ENCODE measurements at regions of chr1 and their contacts with region 1.

Region 1: GRCh38 chr1:8987881-8988617 is 38.2 kb downstream of the SLC2A7 start:
- DNase-seq: peak; percentile 93
- H3K4me3 Mint-ChIP-seq: peak overlapping the region; percentile 65
- H3K27ac Mint-ChIP-seq: peak overlapping the region; percentile 89
- H3K4me1 Mint-ChIP-seq: peaks cover 57% of the 10 kb centered on the region
- H3K27me3 Mint-ChIP-seq: no peaks in the 10 kb centered on the region

Region 2: DNA sequence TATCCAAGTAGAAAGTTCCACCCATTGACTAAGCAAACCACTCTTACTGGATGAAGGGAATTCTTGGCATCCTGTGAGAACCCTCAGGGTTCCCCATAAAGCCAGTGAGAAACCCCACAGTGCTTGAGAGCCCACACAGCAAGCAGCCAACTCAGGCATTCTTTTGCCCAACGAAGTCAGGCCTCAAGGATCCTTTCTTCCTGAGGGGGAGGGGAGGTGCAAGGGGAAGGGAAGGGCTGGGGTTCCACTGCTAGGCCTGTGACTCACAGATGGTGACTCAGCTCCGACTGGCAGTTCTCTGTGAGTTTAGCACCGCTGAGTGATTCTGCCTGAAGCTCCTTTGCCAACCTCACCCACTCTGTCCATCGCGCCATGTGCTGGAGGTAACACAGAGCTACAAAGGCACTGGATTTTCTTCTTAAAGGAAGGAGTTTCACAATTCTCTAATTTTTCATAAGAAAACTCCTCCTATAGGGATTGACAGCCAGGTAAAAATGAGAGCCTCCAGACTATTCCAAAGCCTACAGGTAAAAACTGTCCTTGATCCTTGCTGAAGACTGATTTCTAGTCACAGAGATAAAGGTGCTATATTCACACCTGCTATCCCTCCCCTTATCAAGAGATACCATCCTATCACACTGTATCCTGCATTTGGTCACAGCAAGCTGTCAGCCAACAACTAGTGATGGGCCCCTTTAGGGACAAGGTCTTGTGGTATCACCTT is 114.4 kb before region 1 on chr1:
- intact Hi-C with region 1: loop called (anchors 5 kb)
- DNase-seq: peak; percentile 88
- H3K4me3 Mint-ChIP-seq: peak overlapping the region; percentile 92
- H3K27ac Mint-ChIP-seq: peak overlapping the region; percentile 77
- H3K4me1 Mint-ChIP-seq: peaks cover 59% of the 10 kb centered on the region
- H3K27me3 Mint-ChIP-seq: no peaks in the 10 kb centered on the region

Region 3: DNA sequence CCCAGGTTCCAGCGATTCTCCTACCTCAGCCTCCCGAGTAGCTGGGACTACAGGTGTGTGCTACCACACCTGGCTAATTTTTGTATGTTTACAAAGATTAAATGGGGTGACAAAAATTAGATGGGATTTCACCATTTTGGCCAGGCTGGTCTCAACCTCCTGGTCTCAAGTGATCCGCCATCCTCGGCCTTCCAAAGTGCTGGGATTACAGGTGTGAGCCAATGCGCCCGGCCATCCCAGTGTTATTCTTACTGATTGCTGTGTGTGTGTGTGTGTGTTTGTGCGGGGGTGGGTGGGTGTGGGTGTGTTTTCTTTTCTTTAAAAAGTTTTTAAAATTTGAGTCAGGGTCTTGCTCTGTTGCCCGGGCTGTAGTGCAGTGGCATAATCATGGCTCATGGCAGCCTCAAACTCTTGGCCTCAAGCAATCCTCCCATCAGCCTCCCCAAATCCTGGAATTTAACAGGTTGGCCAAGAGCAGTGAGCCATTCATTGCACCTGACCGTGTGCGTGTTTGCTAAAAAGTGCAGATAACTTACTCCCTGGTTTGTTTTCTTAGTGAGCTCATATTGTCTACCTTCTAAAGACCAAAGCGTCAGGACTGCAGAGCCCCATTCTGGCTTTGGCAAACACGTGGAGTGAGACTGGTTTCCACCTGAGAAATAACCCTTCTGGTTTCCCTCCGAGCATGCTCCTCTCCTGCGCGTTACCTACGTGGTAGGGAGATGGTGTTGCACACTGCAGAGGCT is 74.8 kb before region 1 on chr1:
- intact Hi-C with region 1: loop called (anchors 1 kb)
- DNase-seq: no peak
- H3K4me3 Mint-ChIP-seq: no peak overlapping the region
- H3K27ac Mint-ChIP-seq: no peak overlapping the region
- H3K4me1 Mint-ChIP-seq: peaks cover 27% of the 10 kb centered on the region
- H3K27me3 Mint-ChIP-seq: no peaks in the 10 kb centered on the region

Region 4: GRCh38 chr1:8947127-8947691 is 40.8 kb before region 1 on chr1:
- intact Hi-C with region 1: loop called (anchors 5 kb)
- DNase-seq: peak; percentile 79
- H3K4me3 Mint-ChIP-seq: peak overlapping the region; percentile 69
- H3K27ac Mint-ChIP-seq: peak overlapping the region; percentile 99
- H3K4me1 Mint-ChIP-seq: peaks cover 68% of the 10 kb centered on the region
- H3K27me3 Mint-ChIP-seq: no peaks in the 10 kb centered on the region

Region 5: DNA sequence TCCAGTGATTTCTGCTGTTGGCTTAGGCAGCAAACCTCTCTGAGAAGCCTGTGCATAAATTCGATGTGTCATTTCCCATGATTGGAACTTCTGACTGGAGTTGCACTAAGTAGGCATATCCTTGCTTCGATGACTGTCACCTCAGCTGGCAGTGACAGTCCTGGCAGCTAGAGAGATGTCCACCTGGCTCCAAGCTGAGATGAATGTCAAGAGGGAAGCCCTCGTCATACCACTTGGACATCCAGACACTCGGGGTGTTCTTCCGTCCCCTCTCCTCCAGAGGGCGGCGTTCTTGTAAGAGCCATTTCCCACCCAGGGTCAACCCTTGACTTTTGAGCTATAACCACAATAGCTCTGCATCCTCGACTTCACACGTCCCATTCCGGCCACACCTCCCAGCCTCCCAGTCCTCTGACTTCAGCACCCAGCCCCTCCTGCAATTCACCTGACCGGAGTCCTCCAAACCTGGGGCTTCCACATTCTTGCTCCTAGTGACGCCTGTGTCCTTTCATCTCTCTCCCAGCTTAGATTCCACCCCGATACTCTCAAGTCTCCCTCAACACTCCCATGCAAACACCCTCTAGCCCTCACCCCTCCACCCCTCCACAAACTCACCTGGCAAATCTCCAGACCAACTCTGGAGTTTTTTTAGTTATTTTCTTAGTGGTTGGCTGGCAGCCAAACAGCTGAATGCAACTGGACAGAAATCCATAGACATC is 25.1 kb before region 1 on chr1:
- intact Hi-C with region 1: loop called (anchors 2 kb)
- DNase-seq: peak; percentile 83
- H3K4me3 Mint-ChIP-seq: peak overlapping the region; percentile 71
- H3K27ac Mint-ChIP-seq: peak overlapping the region; percentile 91
- H3K4me1 Mint-ChIP-seq: peaks cover 68% of the 10 kb centered on the region
- H3K27me3 Mint-ChIP-seq: no peaks in the 10 kb centered on the region

Region 6: DNA sequence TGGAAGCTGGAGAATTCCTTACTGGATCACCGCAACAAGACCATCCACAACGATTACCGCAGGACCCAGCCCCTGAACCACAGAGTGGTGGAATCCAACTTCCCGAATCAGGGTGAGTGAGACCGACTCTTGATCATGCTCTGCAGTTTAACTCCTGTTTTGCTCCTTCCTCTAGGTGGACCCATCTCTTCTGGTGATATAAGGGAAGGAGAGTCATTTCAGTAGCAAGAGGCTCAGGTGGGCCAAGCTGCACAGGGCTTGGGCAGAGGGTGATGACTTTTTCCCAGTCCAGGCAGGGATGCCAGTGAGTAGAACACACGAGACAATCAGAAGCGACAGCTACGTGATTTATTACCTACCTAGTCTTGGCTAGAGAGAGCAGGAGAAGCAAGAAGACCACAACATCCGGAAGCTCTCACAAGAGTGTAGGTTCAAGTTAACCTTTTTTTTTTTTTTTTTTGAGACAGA is 17.1 kb before region 1 on chr1:
- intact Hi-C with region 1: loop called (anchors 2 kb)
- DNase-seq: peak; percentile 88
- H3K4me3 Mint-ChIP-seq: peak overlapping the region; percentile 91
- H3K27ac Mint-ChIP-seq: peak overlapping the region; percentile 99
- H3K4me1 Mint-ChIP-seq: peaks cover 51% of the 10 kb centered on the region
- H3K27me3 Mint-ChIP-seq: no peaks in the 10 kb centered on the region

Region 7: DNA sequence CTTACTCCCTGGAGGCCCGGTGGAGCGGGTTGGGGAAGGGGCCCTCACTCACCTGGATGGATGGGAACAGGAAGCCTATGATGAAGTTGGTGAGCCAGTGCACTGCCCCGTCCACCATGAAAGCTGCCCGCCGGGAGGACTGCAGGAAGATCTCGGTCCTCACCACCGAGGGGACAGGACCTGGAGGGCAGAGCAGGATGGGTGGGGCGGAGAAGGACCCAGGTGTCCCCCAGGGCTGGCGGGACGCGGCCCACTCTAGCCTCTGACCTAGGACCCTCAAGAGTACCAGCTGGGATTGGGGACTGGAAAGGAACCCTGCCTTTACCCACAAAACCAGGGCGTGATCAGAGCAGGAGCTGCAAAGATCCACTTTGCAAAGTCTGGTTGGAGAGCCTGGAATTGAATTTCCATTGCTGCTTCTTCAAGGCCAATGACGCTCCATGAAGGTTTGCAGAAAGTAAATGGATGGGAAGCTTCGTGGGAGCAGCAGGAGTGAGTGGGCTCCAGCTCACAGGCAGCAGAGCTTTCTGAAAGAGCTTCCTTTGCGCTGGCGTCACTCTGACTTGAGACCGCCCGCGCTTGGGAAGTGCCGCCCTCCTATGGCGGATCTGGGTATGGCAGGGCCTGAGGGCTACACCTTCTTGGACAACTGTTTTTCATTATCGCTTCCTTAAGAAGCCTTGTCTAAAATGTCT is 16.8 kb after region 1 on chr1:
- intact Hi-C with region 1: loop called (anchors 2 kb)
- DNase-seq: peak; percentile 97
- H3K4me3 Mint-ChIP-seq: no peak overlapping the region
- H3K27ac Mint-ChIP-seq: no peak overlapping the region
- H3K4me1 Mint-ChIP-seq: peaks cover 7% of the 10 kb centered on the region
- H3K27me3 Mint-ChIP-seq: peaks cover 2% of the 10 kb centered on the region

Region 8: GRCh38 chr1:9166289-9167235 is 178.5 kb after region 1 on chr1:
- intact Hi-C with region 1: no loop called
- DNase-seq: no peak
- H3K4me3 Mint-ChIP-seq: no peak overlapping the region
- H3K27ac Mint-ChIP-seq: no peak overlapping the region
- H3K4me1 Mint-ChIP-seq: peaks cover 19% of the 10 kb centered on the region
- H3K27me3 Mint-ChIP-seq: no peaks in the 10 kb centered on the region

Measured in activated CD4-positive, alpha-beta T cell treated with anti-CD3 and anti-CD28 coated beads, Interleukin-2, amount 10 ng/mL, durations not matched to agents 24 days and 14 days (primary cell).